SK-N-SH (cell line): ENCODE measurements at regions of chr5 and their contacts with region 1.

Region 1: DNA sequence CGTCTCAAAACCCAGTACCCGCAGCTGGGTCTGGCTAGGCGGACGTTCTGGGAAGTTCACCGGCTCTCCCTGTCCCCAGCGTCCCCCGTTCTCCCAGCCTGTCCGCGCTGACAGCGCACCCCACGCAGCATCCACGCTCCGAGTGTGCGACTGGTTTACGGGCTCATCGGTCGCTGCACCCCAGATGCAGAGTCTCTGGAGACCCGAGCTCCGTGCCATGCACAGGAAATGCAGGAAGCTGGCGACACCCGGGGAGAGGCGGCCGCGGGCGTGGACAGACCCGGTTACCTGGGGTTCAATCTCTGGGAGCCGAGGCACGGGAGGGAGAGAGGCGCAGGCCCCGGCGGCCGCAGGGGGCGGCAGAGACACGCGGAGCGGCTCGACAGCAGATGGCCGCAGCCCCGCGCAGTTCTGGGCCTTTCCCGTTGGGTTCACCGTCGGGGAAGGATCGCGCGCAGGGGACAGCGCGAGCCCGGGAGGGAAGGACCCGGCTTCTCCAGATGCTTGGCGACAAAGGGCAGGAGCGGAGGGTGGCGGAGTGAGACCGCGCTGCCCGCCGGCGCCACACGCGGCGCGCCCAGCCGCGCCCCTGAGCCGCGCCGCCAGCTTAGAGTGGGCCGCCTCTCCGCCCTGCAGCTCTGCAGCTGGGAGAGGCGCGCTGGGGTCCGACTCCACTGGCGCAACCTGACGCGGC is 558 bp downstream of the SHROOM1 start:
- DNase-seq: peak; percentile 97
- H3K4me3 ChIP-seq: peak overlapping the region; percentile 65 to 71
- H3K27ac ChIP-seq: no peak overlapping the region
- H3K4me1 ChIP-seq: peaks cover 0 to 5% of the 10 kb centered on the region in 2 experiments; a peak in 1 of 4 replicates
- H3K27me3 ChIP-seq: no peaks in the 10 kb centered on the region
- CTCF ChIP-seq: peak; percentile 78
- EP300 ChIP-seq: no peak
- RAD21 ChIP-seq: peak; percentile 75

Region 2: GRCh38 chr5:132746954-132747615 is 82.8 kb before region 1 on chr5 and contains the start of gene CCNI2:
- CTCF ChIA-PET with region 1: interaction called, 13 read pairs
- POLR2A ChIA-PET with region 1: no interaction called
- DNase-seq: peak; percentile 87
- H3K4me3 ChIP-seq: peak within 1 kb of the TSS; percentile 49 to 51; a peak in 3 of 4 replicates
- H3K27ac ChIP-seq: no peak within 1 kb of the TSS
- H3K4me1 ChIP-seq: no peaks in the 10 kb centered on the region; a peak in 1 of 4 replicates
- H3K27me3 ChIP-seq: no peaks in the 10 kb centered on the region
- CTCF ChIP-seq: peak; percentile 54
- EP300 ChIP-seq: no peak
- RAD21 ChIP-seq: peak; percentile 53
- polyA plus RNA-seq, gene CCNI2: 0.05 and 0.34 TPM in 2 replicates

Region 3: DNA sequence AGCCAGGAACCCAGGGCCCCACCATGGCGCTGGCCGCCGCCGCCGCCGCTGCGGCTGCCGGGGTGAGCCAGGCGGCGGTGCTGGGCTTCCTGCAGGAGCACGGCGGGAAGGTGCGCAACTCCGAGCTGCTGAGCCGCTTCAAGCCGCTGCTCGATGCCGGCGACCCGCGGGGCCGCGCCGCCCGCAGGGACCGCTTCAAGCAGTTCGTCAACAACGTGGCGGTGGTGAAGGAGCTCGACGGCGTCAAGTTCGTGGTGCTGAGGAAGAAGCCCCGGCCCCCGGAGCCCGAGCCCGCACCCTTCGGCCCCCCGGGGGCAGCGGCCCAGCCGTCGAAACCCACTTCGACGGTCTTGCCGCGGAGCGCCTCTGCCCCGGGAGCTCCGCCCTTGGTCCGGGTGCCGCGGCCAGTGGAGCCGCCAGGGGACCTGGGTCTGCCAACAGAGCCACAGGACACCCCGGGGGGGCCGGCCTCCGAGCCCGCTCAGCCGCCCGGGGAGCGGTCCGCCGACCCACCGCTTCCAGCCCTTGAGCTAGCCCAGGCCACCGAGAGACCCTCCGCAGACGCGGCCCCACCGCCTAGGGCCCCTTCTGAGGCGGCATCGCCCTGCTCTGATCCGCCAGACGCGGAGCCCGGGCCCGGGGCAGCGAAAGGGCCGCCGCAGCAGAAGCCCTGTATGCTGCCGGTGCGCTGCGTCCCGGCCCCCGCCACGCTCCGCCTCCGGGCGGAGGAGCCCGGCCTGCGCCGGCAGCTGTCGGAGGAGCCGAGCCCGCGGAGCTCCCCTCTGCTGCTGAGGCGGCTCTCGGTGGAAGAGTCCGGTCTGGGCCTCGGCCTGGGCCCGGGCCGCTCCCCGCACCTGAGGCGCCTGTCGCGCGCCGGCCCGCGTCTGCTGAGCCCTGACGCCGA is 16.0 kb before region 1 on chr5:
- CTCF ChIA-PET with region 1: interaction called, 105 read pairs
- POLR2A ChIA-PET with region 1: no interaction called
- DNase-seq: peak; percentile 86
- H3K4me3 ChIP-seq: peak overlapping the region; percentile 59 to 61; a peak in 3 of 4 replicates
- H3K27ac ChIP-seq: no peak overlapping the region
- H3K4me1 ChIP-seq: peaks cover 0 to 2% of the 10 kb centered on the region in 2 experiments; a peak in 2 of 4 replicates
- H3K27me3 ChIP-seq: no peaks in the 10 kb centered on the region
- CTCF ChIP-seq: no peak
- EP300 ChIP-seq: no peak
- RAD21 ChIP-seq: no peak

Region 4: DNA sequence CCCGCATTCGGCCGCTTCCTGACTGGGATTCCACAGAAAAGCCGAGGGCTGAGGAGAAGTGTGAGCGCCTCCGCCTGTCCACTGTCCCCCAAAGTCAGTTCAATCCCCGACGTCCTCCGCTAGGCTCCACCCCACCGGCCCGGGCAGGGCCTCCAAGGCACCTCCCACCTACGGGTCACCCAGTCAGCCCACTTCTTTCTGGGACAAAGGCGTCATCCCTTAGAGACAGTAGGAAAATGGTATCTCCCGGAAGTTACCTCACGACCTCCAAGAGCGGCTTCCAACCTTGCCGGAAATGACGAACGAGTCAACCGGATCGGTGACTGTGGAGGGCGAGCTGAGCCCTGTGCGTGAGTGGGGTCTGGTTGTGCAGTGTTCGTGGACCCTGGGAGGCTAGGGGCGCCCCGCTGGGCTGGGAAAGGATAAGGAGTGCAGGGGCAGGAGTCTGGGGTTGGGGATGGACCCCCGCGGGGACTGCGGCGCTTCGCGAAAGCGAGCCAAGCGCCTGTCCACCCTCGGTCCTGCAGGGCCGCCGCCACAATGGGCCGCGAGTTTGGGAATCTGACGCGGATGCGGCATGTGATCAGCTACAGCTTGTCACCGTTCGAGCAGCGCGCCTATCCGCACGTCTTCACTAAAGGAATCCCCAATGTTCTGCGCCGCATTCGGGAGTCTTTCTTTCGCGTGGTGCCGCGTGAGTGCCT is 36.6 kb after region 1 on chr5 and contains the starts of genes GDF9 and UQCRQ:
- CTCF ChIA-PET with region 1: interaction called, 75 read pairs
- POLR2A ChIA-PET with region 1: interaction called, 9 read pairs
- DNase-seq: peak; percentile 96
- H3K4me3 ChIP-seq: peak within 1 kb of the TSS; percentile 78 to 99
- H3K27ac ChIP-seq: peak within 1 kb of the TSS; percentile 73 to 92
- H3K4me1 ChIP-seq: peaks cover 7 to 14% of the 10 kb centered on the region in 2 experiments; a peak in 3 of 4 replicates
- H3K27me3 ChIP-seq: no peaks in the 10 kb centered on the region
- CTCF ChIP-seq: peak; percentile 46
- EP300 ChIP-seq: peak in 1 of 2 experiments; percentile 32; a peak in 1 of 4 replicates
- RAD21 ChIP-seq: peak; percentile 62
- polyA plus RNA-seq, gene GDF9: 0.82 and 1.2 TPM in 2 replicates
- polyA plus RNA-seq, gene UQCRQ: 510 and 694 TPM in 2 replicates

Region 5: DNA sequence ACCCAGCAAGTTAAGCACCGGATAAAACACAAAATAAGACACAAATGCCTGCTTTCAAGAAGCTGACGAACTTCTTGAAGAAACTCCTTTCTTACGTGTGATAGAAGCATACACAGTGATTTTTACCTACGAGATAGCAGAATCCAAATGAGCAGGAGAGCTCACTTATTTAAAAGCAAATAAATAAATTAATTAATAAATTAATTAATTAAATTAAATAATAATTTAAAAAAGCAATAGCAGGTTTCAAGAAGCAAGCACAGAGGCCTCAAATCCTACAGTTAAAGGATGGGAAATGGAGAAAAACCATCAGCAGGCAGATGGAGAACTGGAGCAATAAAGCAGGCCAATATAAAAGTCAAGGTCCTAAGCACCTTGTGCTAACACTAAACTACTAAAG is 60.9 kb after region 1 on chr5:
- CTCF ChIA-PET with region 1: interaction called, 10 read pairs
- POLR2A ChIA-PET with region 1: no interaction called
- DNase-seq: no peak
- H3K4me3 ChIP-seq: no peak overlapping the region
- H3K27ac ChIP-seq: no peak overlapping the region
- H3K4me1 ChIP-seq: no peaks in the 10 kb centered on the region
- H3K27me3 ChIP-seq: no peaks in the 10 kb centered on the region
- CTCF ChIP-seq: no peak
- EP300 ChIP-seq: no peak
- RAD21 ChIP-seq: no peak